Left lung (tissue), 14 donors: ENCODE measurements at regions of chr2 and their contacts with region 1.

Region 1: DNA sequence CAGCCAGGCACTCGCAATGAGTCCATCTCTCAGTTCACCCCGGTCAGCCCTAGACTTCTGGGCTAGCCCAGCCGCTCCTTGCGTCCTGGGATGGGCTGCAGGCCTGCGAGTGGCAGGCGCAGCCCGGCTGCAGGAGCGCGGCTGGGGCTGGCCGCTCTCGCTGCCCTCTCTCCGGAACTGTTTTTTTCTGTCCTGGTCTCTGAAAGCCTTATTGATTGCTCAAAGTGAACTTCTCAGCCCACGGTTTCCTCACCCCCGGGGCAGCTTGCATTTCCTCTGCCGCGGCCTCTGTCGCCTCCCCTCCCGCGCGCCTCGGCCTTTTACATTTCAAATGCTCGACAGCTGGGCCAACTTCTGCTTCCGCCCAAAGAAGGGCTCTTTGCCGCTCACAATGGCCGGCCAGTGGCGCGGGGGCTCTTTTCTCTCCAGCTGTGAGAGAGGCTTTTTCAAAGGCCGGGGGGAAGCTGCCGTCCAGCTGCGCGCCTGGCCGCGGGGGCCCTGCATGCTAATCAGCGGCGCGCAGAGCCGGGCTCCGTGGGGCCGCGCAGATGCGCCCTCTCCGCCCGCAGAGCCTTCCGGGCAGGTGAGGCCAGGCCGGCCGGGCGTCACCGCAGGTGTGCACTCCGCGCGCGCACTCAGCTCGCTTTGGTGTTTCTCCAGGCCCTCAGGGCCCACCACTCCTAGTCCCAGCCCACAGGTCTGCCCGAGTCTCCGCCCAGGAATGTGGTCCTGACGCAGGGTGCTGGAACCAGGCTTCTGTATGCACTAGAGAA is 513.8 kb downstream of the RNF144A start:
- DNase-seq: peak; percentile 52 to 91 (median 74)
- ATAC-seq: peak; percentile 92
- H3K4me3 ChIP-seq: peak overlapping the region; percentile 31 to 39
- H3K27ac ChIP-seq: peak overlapping the region in 1 of 2 donors; percentile 59
- H3K4me1 ChIP-seq: peaks cover 0 to 40% of the 10 kb centered on the region in 2 donors
- H3K27me3 ChIP-seq: peaks cover 0 to 20% of the 10 kb centered on the region in 2 donors
- CTCF ChIP-seq: no peak

Region 2: GRCh38 chr2:8681786-8682692 is 1251.0 kb after region 1 on chr2 and contains the start of gene ID2:
- intact Hi-C with region 1: loop called in 1 of 2 experiments (anchors 10 kb)
- DNase-seq: peak; percentile 97 to 100 (median 99)
- ATAC-seq: peak; percentile 74
- H3K4me3 ChIP-seq: peak within 1 kb of the TSS; percentile 74 to 76
- H3K27ac ChIP-seq: peak within 1 kb of the TSS; percentile 95
- H3K4me1 ChIP-seq: peaks cover 22 to 67% of the 10 kb centered on the region in 2 donors
- H3K27me3 ChIP-seq: peaks cover 0 to 19% of the 10 kb centered on the region in 2 donors
- CTCF ChIP-seq: no peak
- polyA plus RNA-seq, gene ID2: 300 to 499 (median 372) TPM